Adrenal gland (tissue), 19 donors: ENCODE measurements at regions of chr18 and their contacts with region 1.

Region 1: GRCh38 chr18:5237723-5238370 is 40.8 kb upstream of the AKAIN1 start:
- DNase-seq: peak; percentile 86 to 92 (median 87)
- H3K4me3 ChIP-seq: peak overlapping the region; percentile 30 to 95 (median 82)
- H3K27ac ChIP-seq: peak overlapping the region; percentile 87 to 100 (median 98)
- H3K4me1 ChIP-seq: peaks cover 12 to 24% of the 10 kb centered on the region in 2 donors
- H3K27me3 ChIP-seq: no peaks in the 10 kb centered on the region
- CTCF ChIP-seq: peak in 5 of 6 experiments; percentile 1 to 52 (median 39)
- POLR2A ChIP-seq: peak; percentile 35 to 79

Region 2: GRCh38 chr18:3447895-3448837 is 1789.7 kb before region 1 on chr18:
- intact Hi-C with region 1: no loop called
- DNase-seq: peak; percentile 94 to 98 (median 97)
- H3K4me3 ChIP-seq: peak overlapping the region; percentile 16 to 95 (median 46)
- H3K27ac ChIP-seq: peak overlapping the region; percentile 96 to 99 (median 97)
- H3K4me1 ChIP-seq: peaks cover 18 to 25% of the 10 kb centered on the region in 2 donors
- H3K27me3 ChIP-seq: no peaks in the 10 kb centered on the region
- CTCF ChIP-seq: peak in 1 of 6 experiments; percentile 24
- POLR2A ChIP-seq: peak; percentile 86 to 99

Region 3: GRCh38 chr18:5167831-5168230 is 70.0 kb before region 1 on chr18:
- intact Hi-C with region 1: no loop called
- DNase-seq: no peak
- H3K4me3 ChIP-seq: no peak overlapping the region
- H3K27ac ChIP-seq: no peak overlapping the region
- H3K4me1 ChIP-seq: no peaks in the 10 kb centered on the region
- H3K27me3 ChIP-seq: no peaks in the 10 kb centered on the region
- CTCF ChIP-seq: no peak
- POLR2A ChIP-seq: no peak

Region 4: GRCh38 chr18:5295981-5296705 is 58.3 kb after region 1 on chr18:
- intact Hi-C with region 1: loop called in 1 of 2 experiments (anchors 5 kb)
- DNase-seq: peak; percentile 95 to 98 (median 96)
- H3K4me3 ChIP-seq: peak overlapping the region; percentile 66 to 99 (median 90)
- H3K27ac ChIP-seq: peak overlapping the region; percentile 94 to 99 (median 99)
- H3K4me1 ChIP-seq: peaks cover 0 to 19% of the 10 kb centered on the region in 2 donors
- H3K27me3 ChIP-seq: no peaks in the 10 kb centered on the region
- CTCF ChIP-seq: peak in 1 of 6 experiments; percentile 3
- POLR2A ChIP-seq: peak; percentile 85 to 88